ENCODE measurements at regions of chr3 and their contacts with region 1.

Region 1: GRCh38 chr3:126703512-126704462 is at the start of gene CHCHD6:
- DNase-seq: peak; percentile 92 to 99 (median 96)
- ATAC-seq: peak; percentile 93
- H3K4me3 ChIP-seq: peak within 1 kb of the TSS; percentile 74 to 75
- H3K4me3 Mint-ChIP-seq: peak within 1 kb of the TSS; percentile 98
- H3K27ac ChIP-seq: peak within 1 kb of the TSS in 1 of 2 experiments; percentile 36
- H3K27ac Mint-ChIP-seq: peak within 1 kb of the TSS; percentile 88
- H3K4me1 ChIP-seq: peaks cover 17% of the 10 kb centered on the region
- H3K4me1 Mint-ChIP-seq: peaks cover 22% of the 10 kb centered on the region
- H3K27me3 ChIP-seq: no peaks in the 10 kb centered on the region
- H3K27me3 Mint-ChIP-seq: peaks cover 15% of the 10 kb centered on the region
- CTCF ChIP-seq: no peak
- total RNA-seq, gene CHCHD6: 6.2 to 6.4 TPM

Region 2: DNA sequence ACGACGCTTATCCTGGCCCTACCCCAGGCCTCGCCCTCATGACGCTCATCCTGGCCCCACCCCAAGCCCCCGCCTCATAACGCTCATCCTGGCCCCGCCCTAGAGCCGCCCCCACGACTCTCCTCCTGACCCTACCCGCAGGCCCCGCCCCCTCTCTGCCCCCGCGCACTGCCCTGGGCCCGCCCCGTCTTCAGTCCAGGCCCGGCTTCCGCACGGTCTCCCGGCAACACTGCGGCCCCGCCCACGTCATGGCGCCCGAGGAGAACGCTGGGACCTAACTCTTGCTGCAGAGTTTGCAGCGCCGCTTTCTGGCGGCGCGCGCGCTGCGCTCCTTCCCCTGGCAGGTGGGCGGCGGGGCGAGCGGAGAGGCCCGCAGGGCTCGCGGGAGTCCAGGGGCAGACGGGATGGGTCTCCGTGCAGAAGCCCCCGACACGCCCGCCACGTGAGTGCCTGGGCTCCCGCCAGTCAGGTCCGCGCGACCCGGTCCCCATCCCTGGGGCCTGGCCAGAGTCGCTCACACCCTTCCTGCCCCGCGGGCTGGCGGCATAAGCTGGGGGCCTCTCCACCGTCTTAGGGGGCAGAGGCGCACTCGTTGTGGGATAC is 787.3 kb before region 1 on chr3:
- CTCF ChIA-PET with region 1: no interaction called
- POLR2A ChIA-PET with region 1: no interaction called
- intact Hi-C with region 1: loop called in 1 of 2 experiments (anchors 2 kb)
- DNase-seq: peak; percentile 89 to 98 (median 94)
- ATAC-seq: peak; percentile 94
- H3K4me3 ChIP-seq: peak overlapping the region; percentile 61 to 81
- H3K4me3 Mint-ChIP-seq: peak overlapping the region; percentile 90
- H3K27ac ChIP-seq: peak overlapping the region; percentile 74 to 84
- H3K27ac Mint-ChIP-seq: peak overlapping the region; percentile 96
- H3K4me1 ChIP-seq: peaks cover 6% of the 10 kb centered on the region
- H3K4me1 Mint-ChIP-seq: peaks cover 19% of the 10 kb centered on the region
- H3K27me3 ChIP-seq: no peaks in the 10 kb centered on the region
- H3K27me3 Mint-ChIP-seq: no peaks in the 10 kb centered on the region
- CTCF ChIP-seq: peak; percentile 18

Region 3: DNA sequence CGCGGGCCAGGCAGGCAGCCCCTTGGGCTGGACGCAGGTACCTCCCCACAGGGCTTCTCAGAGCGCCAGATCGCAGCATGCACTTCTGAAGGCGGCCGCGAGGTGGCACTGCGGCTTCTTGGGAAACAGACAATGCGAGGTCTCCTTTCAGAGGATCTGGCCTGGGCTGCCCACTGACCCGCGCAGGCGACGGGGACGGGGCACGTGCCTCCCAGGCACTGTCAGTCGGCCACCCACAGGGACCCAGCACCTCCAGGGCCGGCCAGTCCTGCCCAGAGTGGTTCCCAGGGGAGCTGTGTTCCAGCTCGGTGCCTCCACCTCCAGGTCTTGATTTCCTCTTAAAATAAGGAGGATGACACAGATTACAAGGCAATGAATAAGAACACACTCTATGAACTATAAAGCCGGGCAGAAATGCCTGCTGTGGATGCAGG is 24.5 kb before region 1 on chr3:
- CTCF ChIA-PET with region 1: interaction called, 6 read pairs
- POLR2A ChIA-PET with region 1: no interaction called
- intact Hi-C with region 1: loop called in 1 of 2 experiments (anchors 2 kb)
- DNase-seq: peak; percentile 61 to 86 (median 75)
- ATAC-seq: peak; percentile 90
- H3K4me3 ChIP-seq: peak overlapping the region in 1 of 2 experiments; percentile 7
- H3K4me3 Mint-ChIP-seq: peak overlapping the region; percentile 37
- H3K27ac ChIP-seq: no peak overlapping the region
- H3K27ac Mint-ChIP-seq: no peak overlapping the region
- H3K4me1 ChIP-seq: peaks cover 3% of the 10 kb centered on the region
- H3K4me1 Mint-ChIP-seq: peaks cover 3% of the 10 kb centered on the region
- H3K27me3 ChIP-seq: no peaks in the 10 kb centered on the region
- H3K27me3 Mint-ChIP-seq: peaks cover 6% of the 10 kb centered on the region
- CTCF ChIP-seq: peak; percentile 96

Region 4: GRCh38 chr3:127590593-127591477 is 887.0 kb after region 1 on chr3 and contains the start of gene TPRA1:
- CTCF ChIA-PET with region 1: no interaction called
- POLR2A ChIA-PET with region 1: no interaction called
- intact Hi-C with region 1: loop called (anchors 1 to 10 kb)
- DNase-seq: peak; percentile 46 to 94 (median 79)
- ATAC-seq: peak; percentile 86
- H3K4me3 ChIP-seq: peak within 1 kb of the TSS; percentile 75 to 81
- H3K4me3 Mint-ChIP-seq: peak within 1 kb of the TSS; percentile 97
- H3K27ac ChIP-seq: peak within 1 kb of the TSS; percentile 68 to 74
- H3K27ac Mint-ChIP-seq: peak within 1 kb of the TSS; percentile 91
- H3K4me1 ChIP-seq: peaks cover 20% of the 10 kb centered on the region
- H3K4me1 Mint-ChIP-seq: peaks cover 35% of the 10 kb centered on the region
- H3K27me3 ChIP-seq: no peaks in the 10 kb centered on the region
- H3K27me3 Mint-ChIP-seq: no peaks in the 10 kb centered on the region
- CTCF ChIP-seq: no peak
- total RNA-seq, gene TPRA1: 6.0 to 6.1 TPM